Heart right ventricle (tissue), 16 donors: ENCODE measurements at regions of chr6 and their contacts with region 1.

Region 1: GRCh38 chr6:33430991-33431879 is 11.4 kb downstream of the SYNGAP1 start:
- DNase-seq: peak; percentile 57 to 70
- ATAC-seq: peak in 3 of 8 donors; percentile 25 to 36 (median 30)
- H3K4me3 ChIP-seq: peak overlapping the region in 2 of 10 donors; percentile 3 to 33
- H3K27ac ChIP-seq: no peak overlapping the region
- H3K4me1 ChIP-seq: peaks cover 13 to 74% (median 61%) of the 10 kb centered on the region in 9 donors
- H3K27me3 ChIP-seq: no peaks in the 10 kb centered on the region
- CTCF ChIP-seq: no peak

Region 2: GRCh38 chr6:33607784-33608161 is 176.5 kb after region 1 on chr6:
- intact Hi-C with region 1: no loop called
- DNase-seq: no peak
- ATAC-seq: no peak
- H3K4me3 ChIP-seq: no peak overlapping the region
- H3K27ac ChIP-seq: no peak overlapping the region
- H3K4me1 ChIP-seq: peaks cover 11 to 49% (median 30%) of the 10 kb centered on the region in 9 donors
- H3K27me3 ChIP-seq: no peaks in the 10 kb centered on the region
- CTCF ChIP-seq: peak in 4 of 9 donors; percentile 10 to 34 (median 14)

Region 3: GRCh38 chr6:33700391-33701050 is 269.3 kb after region 1 on chr6:
- intact Hi-C with region 1: loop called in 1 of 10 experiments (anchors 10 kb)
- DNase-seq: peak; percentile 61 to 62
- ATAC-seq: peak in 7 of 8 donors; percentile 22 to 66 (median 50)
- H3K4me3 ChIP-seq: no peak overlapping the region
- H3K27ac ChIP-seq: peak overlapping the region in 4 of 10 donors; percentile 19 to 60 (median 24)
- H3K4me1 ChIP-seq: peaks cover 18 to 69% (median 46%) of the 10 kb centered on the region in 9 donors
- H3K27me3 ChIP-seq: no peaks in the 10 kb centered on the region
- CTCF ChIP-seq: peak; percentile 38 to 77 (median 68)